H1 (cell line): ENCODE measurements at regions of chr2 and their contacts with region 1.

Region 1: DNA sequence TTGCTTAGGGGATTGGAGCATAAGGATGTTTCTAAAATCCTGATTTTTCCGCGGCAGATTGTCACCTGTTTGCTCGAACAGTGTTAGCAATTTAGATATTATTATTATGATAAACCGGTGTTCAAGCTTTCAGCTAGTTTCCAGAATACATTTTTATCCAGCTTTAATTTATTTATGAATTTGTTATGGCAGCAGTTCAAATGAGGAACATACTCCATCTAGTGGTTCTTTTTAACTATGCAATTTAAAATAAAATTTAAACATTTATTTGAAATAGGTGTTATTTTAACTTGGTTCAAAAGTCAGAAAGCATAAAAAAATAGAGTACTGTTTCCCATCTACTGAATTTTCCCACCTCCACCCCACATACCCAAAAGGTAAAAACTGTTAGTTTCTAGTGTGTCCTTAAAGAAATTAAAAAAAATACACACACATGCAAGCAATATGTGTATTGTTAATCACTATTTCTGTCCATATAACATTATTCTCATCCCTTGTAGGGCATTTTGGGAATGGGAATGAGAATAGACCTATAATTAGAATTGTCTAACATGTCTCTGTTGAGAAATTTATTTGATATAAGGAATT is 23.2 kb downstream of the ACOXL start:
- DNase-seq: no peak
- H3K4me3 ChIP-seq: no peak overlapping the region
- H3K27ac ChIP-seq: no peak overlapping the region
- H3K4me1 ChIP-seq: peaks cover 2 to 11% (median 6%) of the 10 kb centered on the region in 4 experiments; a peak in 5 of 7 replicates
- H3K27me3 ChIP-seq: no peaks in the 10 kb centered on the region
- CTCF ChIP-seq: peak in 2 of 3 experiments; percentile 8 to 14; a peak in 2 of 4 replicates
- EP300 ChIP-seq: no peak
- POLR2A ChIP-seq: no peak
- RAD21 ChIP-seq: peak; percentile 48 to 57

Region 2: DNA sequence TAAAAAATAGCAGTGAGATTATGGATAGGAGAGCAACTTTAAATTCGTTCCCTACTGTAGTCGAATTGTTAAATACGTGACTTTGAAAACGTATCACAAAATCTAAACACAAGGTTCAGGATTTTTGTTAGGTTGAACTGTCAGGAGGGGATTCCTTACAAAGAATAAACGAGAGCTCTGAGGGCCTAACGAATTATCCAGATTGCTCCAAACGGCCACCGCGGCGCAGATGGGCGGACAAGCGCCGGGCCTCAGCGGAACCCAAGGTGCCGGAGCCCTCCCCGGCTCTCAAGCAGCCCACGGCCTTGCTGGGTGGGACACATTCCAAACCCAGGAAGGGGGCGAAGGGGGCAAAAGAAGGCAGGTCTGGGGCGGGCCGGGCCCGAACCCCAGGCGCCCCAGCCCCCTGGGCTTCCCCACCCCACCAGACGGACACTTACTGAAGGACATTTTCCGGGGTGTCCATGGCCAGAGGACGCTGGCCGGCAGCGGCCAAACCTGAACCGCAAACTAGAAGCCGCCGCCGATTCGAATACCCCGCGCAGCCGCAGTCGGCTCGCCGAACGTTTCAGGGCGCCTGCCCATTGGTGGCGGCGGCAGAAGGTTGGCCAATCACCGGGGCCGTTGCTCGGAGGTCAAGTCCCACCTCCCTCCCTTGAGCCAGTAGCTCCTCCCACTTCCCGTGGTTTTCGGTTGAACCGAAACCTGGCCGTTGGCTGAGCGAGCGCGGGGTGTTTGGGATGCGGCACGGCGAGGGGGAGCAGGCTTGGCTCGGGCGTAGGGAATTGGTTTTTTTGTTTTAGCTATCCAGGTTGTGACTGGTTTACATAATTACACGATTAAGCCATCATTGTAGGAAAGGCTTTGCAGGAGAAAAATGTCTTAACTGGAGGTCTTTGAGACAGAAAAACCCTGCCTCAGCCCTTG is 77.8 kb before region 1 on chr2 and contains the start of gene BUB1:
- CTCF ChIA-PET with region 1: interaction called, 27 read pairs
- POLR2A ChIA-PET with region 1: interaction called, 4 read pairs
- DNase-seq: peak; percentile 87 to 98
- H3K4me3 ChIP-seq: peak within 1 kb of the TSS; percentile 79 to 91 (median 81)
- H3K27ac ChIP-seq: peak within 1 kb of the TSS; percentile 67
- H3K4me1 ChIP-seq: peaks cover 10 to 22% (median 12%) of the 10 kb centered on the region in 4 experiments
- H3K27me3 ChIP-seq: peaks cover 0 to 3% (median 0%) of the 10 kb centered on the region in 4 experiments; a peak in 2 of 7 replicates
- CTCF ChIP-seq: no peak
- EP300 ChIP-seq: no peak
- POLR2A ChIP-seq: peak; percentile 76 to 85
- RAD21 ChIP-seq: peak in 1 of 2 experiments; percentile 8; a peak in 1 of 4 replicates
- total RNA-seq, gene BUB1: 113 and 118 TPM in 2 replicates

Region 3: DNA sequence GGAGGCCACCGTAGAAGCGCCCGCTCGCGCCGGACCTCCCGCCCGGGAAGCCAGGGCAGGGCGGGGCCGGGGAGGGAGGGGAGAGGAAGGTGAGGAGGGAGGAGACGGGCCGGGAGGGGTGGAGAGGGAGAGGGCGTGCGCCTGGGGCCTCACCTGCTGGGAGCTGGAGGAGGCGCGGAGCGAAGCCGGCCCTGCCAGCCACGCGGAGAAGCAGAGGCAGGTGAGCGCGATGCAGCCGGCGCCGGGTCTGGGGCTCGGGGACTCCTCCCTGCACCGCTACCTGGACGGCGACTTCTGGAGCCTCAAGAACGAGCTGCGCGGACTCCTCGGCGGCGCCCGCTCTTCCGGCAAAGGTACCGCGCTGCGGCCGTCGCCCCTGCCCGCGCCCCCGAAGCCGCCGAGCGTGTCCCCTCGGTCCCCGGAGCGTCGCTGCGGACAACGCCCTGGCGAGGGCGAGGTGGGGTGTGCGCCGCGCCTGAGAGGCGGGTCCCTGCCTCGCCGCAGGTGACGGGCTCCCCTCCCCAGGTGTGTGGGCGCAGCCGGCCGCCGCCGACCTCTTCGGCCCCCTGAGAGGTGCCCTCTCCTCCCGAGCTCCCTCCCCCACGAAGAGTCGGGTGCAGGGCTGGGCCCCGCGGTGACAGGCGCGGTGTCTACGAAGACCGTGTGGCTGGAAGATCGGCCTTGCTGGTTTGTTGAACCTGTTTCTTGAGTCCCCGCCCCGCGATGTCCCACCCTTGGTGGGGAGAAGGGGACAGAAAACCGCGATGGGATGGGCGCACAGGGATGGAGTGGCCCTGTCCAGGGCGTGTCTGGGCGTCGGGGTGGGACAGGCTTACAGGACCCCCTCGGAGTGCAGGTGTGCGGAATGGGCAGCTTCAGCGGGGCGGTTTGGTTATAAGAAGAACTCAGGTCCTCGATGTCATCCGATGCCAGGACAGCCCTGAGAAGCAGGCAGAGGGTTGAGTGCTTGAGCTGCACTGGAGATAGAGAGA is 22.9 kb before region 1 on chr2 and contains the start of gene ACOXL:
- CTCF ChIA-PET with region 1: interaction called, 19 read pairs
- POLR2A ChIA-PET with region 1: no interaction called
- DNase-seq: peak; percentile 68 to 89
- H3K4me3 ChIP-seq: peak within 1 kb of the TSS; percentile 61 to 81 (median 79)
- H3K27ac ChIP-seq: no peak within 1 kb of the TSS
- H3K4me1 ChIP-seq: peaks cover 3 to 18% (median 10%) of the 10 kb centered on the region in 4 experiments
- H3K27me3 ChIP-seq: peaks cover 0 to 10% (median 2%) of the 10 kb centered on the region in 4 experiments; a peak in 3 of 7 replicates
- CTCF ChIP-seq: no peak
- EP300 ChIP-seq: peak in 1 of 2 experiments; percentile 8; a peak in 1 of 3 replicates
- POLR2A ChIP-seq: peak in 1 of 2 experiments; percentile 49; a peak in 1 of 3 replicates
- RAD21 ChIP-seq: peak in 1 of 2 experiments; percentile 23; a peak in 1 of 4 replicates
- total RNA-seq, gene ACOXL: 20.6 and 20.8 TPM in 2 replicates

Region 4: DNA sequence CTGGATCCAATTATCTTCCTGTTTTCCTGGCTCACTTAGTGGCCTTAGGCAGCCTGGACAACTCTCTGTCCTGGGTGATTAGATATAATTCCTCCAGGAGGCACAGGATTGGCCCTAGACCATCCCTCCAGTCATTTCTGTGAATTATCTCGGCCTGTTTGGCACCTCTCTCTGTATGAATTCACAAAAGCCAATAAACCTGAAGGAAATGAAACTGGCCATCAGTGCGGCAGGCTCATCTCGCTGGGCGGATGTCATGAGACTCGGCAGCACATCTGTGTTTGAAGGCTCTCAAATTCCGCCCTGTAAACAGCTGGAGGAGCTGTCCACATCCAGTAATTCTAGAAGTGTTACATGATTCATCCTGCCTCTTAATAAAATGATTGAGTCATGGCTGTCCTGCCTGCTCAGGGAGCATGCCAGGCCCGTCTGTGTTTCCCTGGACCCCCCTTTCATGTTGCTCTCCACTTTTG is 15.4 kb after region 1 on chr2:
- CTCF ChIA-PET with region 1: interaction called, 28 read pairs
- POLR2A ChIA-PET with region 1: interaction called, 5 read pairs
- DNase-seq: no peak
- H3K4me3 ChIP-seq: no peak overlapping the region
- H3K27ac ChIP-seq: no peak overlapping the region
- H3K4me1 ChIP-seq: peaks cover 18 to 43% (median 32%) of the 10 kb centered on the region in 4 experiments
- H3K27me3 ChIP-seq: no peaks in the 10 kb centered on the region
- CTCF ChIP-seq: no peak
- EP300 ChIP-seq: no peak
- POLR2A ChIP-seq: no peak
- RAD21 ChIP-seq: no peak

Region 5: GRCh38 chr2:110838657-110839384 is 83.2 kb after region 1 on chr2:
- CTCF ChIA-PET with region 1: no interaction called
- POLR2A ChIA-PET with region 1: no interaction called
- DNase-seq: no peak
- H3K4me3 ChIP-seq: no peak overlapping the region
- H3K27ac ChIP-seq: no peak overlapping the region
- H3K4me1 ChIP-seq: peaks cover 16 to 45% (median 39%) of the 10 kb centered on the region in 4 experiments
- H3K27me3 ChIP-seq: no peaks in the 10 kb centered on the region
- CTCF ChIP-seq: no peak
- EP300 ChIP-seq: no peak
- POLR2A ChIP-seq: no peak
- RAD21 ChIP-seq: no peak